ENCODE measurements at regions of chr14 and their contacts with region 1.

Region 1: DNA sequence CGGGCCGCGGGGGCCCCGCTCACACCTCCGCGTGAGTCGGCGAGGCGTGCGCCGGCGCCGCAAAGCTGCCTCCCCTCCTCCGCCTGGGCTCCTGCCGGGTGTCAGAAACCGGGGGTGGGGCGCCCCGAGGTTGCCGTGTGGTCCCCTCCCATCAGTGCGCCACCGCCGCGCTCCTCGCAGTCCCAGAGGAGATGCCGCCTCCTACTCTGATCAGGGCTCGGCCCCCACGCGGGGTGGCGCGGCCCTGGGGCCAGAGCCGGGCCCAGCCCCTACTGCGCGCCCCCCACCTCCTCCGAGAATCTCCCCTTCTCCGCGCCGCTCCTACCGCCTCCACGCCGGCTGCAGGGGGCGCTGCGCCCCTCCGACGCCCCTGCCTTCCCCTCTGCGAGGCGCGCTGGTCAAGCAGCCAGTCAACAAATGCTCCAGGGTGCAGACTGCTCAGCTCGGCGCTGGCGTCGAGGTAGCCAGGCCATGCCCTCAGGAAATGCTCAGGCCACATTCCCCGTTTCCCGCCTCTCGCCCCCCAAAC is 467 bp upstream of the JAG2 start:
- DNase-seq: peak; percentile 81
- H3K4me3 ChIP-seq: peak overlapping the region; percentile 11 to 41 (median 16)
- H3K27ac ChIP-seq: peak overlapping the region; percentile 2
- H3K4me1 ChIP-seq: peaks cover 39% of the 10 kb centered on the region
- H3K27me3 ChIP-seq: no peaks in the 10 kb centered on the region
- CTCF ChIP-seq: peak; percentile 86 to 92
- POLR2A ChIP-seq: no peak

Region 2: DNA sequence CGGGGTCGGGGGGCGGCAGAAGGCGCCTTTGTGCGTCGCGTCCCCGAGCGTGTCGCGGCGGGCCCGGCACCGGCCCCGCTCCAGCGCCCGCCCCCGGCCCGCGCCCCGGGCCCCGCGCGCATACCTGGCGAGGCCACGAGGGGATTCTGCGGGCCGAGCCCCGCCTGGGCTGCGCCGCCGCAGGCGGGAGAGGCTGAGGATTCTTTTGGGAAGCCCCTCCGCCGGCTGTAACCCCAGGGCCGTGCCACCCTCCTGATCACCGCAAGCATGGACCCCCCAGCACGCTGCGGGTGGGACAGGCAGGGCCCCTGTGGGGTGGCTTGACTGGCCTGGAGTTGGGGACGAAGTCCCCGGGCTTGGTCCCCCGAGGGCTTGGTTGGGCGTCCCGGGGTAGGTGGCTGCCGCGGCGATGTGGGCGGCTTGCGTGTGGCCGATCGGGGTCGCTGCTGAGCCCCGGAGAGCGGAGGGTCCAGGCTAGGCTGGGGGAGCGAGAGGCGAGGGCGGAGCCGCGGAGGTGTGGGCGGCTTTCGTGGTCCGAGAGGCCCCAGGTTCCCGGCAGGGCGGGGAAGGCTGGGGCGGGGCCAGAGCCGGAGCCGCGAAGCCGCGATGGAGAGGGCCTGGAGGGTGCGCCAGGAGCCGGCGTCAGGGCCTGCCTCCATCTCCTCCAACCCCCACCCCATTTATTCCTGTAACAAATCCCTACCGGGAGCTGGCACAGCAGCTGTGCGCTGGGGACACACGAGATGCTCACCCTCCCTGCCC is 75.4 kb before region 1 on chr14:
- CTCF ChIA-PET with region 1: interaction called, 15 read pairs
- POLR2A ChIA-PET with region 1: no interaction called
- dilution Hi-C with region 1: no loop called
- intact Hi-C with region 1: loop called (anchors 1 kb)
- DNase-seq: peak; percentile 68
- H3K4me3 ChIP-seq: peak overlapping the region; percentile 43 to 61 (median 59)
- H3K27ac ChIP-seq: peak overlapping the region; percentile 26
- H3K4me1 ChIP-seq: peaks cover 11% of the 10 kb centered on the region
- H3K27me3 ChIP-seq: no peaks in the 10 kb centered on the region
- CTCF ChIP-seq: peak; percentile 48 to 82
- POLR2A ChIP-seq: no peak

Region 3: DNA sequence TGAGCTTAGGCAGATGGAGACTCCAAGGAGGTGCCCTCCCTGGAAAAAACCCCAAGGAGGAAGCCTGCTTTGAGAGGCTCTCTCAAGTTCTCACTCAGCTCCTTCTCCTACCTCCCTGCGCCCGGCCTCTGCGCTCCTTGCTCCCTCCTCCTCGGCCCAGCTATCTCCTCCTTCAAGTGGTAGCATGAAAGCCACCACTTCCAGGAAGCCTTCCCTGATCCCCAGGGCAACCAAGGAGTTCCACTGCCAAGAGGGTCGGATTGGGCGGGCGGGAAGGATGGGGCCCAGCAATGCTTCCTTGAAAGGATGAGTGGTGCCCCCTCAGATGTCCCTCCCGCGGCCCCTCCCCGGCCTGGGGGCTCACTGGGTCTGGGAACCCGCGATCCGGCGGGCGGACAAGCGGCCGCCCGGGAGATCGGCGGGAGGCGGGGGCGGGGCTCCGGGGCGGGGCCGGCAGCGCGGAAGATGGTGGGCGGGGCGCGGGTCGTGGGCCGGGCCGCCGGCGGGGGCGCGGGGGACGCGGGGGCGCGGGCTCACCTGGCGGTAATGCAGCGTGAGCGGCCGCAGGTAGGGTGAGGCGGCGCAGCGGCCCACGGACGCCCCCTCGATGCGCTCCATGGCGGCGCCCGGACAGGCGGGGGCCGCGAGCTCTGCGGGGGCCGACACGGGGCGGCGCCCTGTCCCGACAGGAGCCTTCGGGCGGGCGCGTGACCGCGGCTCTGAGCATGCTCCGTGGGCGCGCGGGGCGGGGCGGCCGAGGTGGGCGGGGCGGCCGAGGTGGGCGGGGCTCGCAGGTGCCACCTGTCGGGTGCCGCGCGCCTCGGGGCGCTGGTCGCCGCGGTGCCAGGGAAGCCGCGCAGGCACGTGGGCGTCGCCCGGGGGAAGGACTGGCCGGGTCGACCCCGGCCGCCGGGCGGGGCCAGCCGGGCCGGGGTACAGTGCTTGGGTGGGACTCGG is 11.8 kb after region 1 on chr14 and contains the start of gene NUDT14:
- CTCF ChIA-PET with region 1: interaction called, 31 read pairs
- POLR2A ChIA-PET with region 1: no interaction called
- dilution Hi-C with region 1: no loop called
- intact Hi-C with region 1: no loop called
- DNase-seq: peak; percentile 57
- H3K4me3 ChIP-seq: peak within 1 kb of the TSS; percentile 20 to 65 (median 53)
- H3K27ac ChIP-seq: no peak within 1 kb of the TSS
- H3K4me1 ChIP-seq: peaks cover 19% of the 10 kb centered on the region
- H3K27me3 ChIP-seq: no peaks in the 10 kb centered on the region
- CTCF ChIP-seq: no peak
- POLR2A ChIP-seq: peak; percentile 49
- total RNA-seq, gene NUDT14: 97.7 and 104 TPM in 2 replicates

Region 4: GRCh38 chr14:105203057-105203531 is 34.1 kb after region 1 on chr14:
- CTCF ChIA-PET with region 1: interaction called, 94 read pairs
- POLR2A ChIA-PET with region 1: interaction called, 3 read pairs
- dilution Hi-C with region 1: no loop called
- intact Hi-C with region 1: loop called (anchors 1 kb)
- DNase-seq: peak; percentile 55
- H3K4me3 ChIP-seq: no peak overlapping the region
- H3K27ac ChIP-seq: no peak overlapping the region
- H3K4me1 ChIP-seq: peaks cover 24% of the 10 kb centered on the region
- H3K27me3 ChIP-seq: no peaks in the 10 kb centered on the region
- CTCF ChIP-seq: peak; percentile 94 to 96
- POLR2A ChIP-seq: no peak

Region 5: GRCh38 chr14:105281371-105282097 is 112.5 kb after region 1 on chr14:
- CTCF ChIA-PET with region 1: interaction called, 4 read pairs
- POLR2A ChIA-PET with region 1: no interaction called
- dilution Hi-C with region 1: no loop called
- intact Hi-C with region 1: loop called (anchors 1 kb)
- DNase-seq: peak; percentile 61
- H3K4me3 ChIP-seq: no peak overlapping the region
- H3K27ac ChIP-seq: no peak overlapping the region
- H3K4me1 ChIP-seq: peaks cover 11% of the 10 kb centered on the region
- H3K27me3 ChIP-seq: no peaks in the 10 kb centered on the region
- CTCF ChIP-seq: peak; percentile 63 to 67
- POLR2A ChIP-seq: no peak

Measured in endothelial cell of umbilical vein (primary cell).